WTC11 (cell line): ENCODE measurements at regions of chr2 and their contacts with region 1.

Region 1: GRCh38 chr2:233251306-233252116 is at the start of gene ATG16L1:
- DNase-seq: peak; percentile 94
- ATAC-seq: peak; percentile 98
- H3K4me3 Mint-ChIP-seq: peak within 1 kb of the TSS; percentile 95
- H3K27ac Mint-ChIP-seq: peak within 1 kb of the TSS; percentile 86
- H3K4me1 Mint-ChIP-seq: peaks cover 8% of the 10 kb centered on the region
- H3K27me3 Mint-ChIP-seq: peaks cover 2% of the 10 kb centered on the region; the same call in 1 of the 2 replicates
- CTCF ChIP-seq: peak; percentile 65
- total RNA-seq, gene ATG16L1: 31.8 to 36.4 TPM (median 32.5 TPM) in 3 replicates

Region 2: GRCh38 chr2:232979871-232980461 is 271.5 kb before region 1 on chr2:
- CTCF ChIA-PET with region 1: interaction called, 11 read pairs
- POLR2A ChIA-PET with region 1: no interaction called
- DNase-seq: no peak
- ATAC-seq: no peak
- H3K4me3 Mint-ChIP-seq: no peak overlapping the region
- H3K27ac Mint-ChIP-seq: peak overlapping the region; percentile 82
- H3K4me1 Mint-ChIP-seq: peaks cover 30% of the 10 kb centered on the region
- H3K27me3 Mint-ChIP-seq: no peaks in the 10 kb centered on the region
- CTCF ChIP-seq: no peak

Region 3: DNA sequence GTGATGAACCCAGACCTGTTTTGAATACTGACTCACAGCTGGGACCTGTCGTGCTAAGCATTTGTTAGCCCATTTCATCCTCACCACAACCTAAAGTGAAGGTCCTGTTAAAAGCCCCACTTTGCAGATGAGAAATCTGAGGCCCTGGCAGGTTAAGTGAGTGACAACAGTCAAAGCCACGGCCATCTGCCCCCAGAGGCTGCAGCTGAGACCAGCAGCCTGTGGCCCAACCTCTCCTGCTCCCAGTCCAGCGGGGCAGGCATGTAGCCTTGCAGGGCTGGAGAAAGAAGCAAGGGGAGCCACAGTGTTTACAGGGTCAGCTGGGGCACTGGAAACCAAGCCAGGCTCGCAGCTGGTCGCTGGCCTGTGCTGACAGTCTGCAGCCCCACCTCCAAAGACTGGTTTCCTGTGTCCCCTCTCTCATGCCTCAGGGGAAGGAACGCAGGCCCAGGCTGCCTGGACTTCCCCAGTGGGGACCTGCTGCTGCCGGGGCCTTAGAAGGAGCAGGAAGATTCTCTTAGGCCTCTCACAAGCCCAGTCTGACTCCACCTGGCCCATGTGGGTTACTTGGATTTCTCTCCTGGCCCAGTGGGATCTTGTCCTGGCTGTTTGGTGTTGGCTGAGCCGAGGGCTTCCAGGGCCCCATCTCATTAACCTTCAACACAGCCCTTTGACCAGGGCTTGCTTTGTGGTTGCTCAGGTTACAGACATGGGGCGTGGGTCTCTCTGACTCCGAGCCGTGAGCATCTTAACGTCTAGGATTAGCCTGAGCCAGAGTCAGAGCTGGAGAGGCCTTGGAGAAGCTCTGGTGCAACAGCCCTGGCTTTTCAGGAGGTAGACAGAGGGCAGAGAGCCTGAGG is 189.7 kb before region 1 on chr2:
- CTCF ChIA-PET with region 1: interaction called, 13 read pairs
- POLR2A ChIA-PET with region 1: no interaction called
- DNase-seq: no peak
- ATAC-seq: peak; percentile 40
- H3K4me3 Mint-ChIP-seq: no peak overlapping the region
- H3K27ac Mint-ChIP-seq: no peak overlapping the region
- H3K4me1 Mint-ChIP-seq: peaks cover 16% of the 10 kb centered on the region
- H3K27me3 Mint-ChIP-seq: no peaks in the 10 kb centered on the region
- CTCF ChIP-seq: no peak

Region 4: GRCh38 chr2:233100192-233100998 is 151.1 kb before region 1 on chr2:
- CTCF ChIA-PET with region 1: interaction called, 22 read pairs
- POLR2A ChIA-PET with region 1: no interaction called
- DNase-seq: no peak
- ATAC-seq: no peak
- H3K4me3 Mint-ChIP-seq: no peak overlapping the region
- H3K27ac Mint-ChIP-seq: no peak overlapping the region
- H3K4me1 Mint-ChIP-seq: peaks cover 3% of the 10 kb centered on the region
- H3K27me3 Mint-ChIP-seq: no peaks in the 10 kb centered on the region
- CTCF ChIP-seq: no peak

Region 5: DNA sequence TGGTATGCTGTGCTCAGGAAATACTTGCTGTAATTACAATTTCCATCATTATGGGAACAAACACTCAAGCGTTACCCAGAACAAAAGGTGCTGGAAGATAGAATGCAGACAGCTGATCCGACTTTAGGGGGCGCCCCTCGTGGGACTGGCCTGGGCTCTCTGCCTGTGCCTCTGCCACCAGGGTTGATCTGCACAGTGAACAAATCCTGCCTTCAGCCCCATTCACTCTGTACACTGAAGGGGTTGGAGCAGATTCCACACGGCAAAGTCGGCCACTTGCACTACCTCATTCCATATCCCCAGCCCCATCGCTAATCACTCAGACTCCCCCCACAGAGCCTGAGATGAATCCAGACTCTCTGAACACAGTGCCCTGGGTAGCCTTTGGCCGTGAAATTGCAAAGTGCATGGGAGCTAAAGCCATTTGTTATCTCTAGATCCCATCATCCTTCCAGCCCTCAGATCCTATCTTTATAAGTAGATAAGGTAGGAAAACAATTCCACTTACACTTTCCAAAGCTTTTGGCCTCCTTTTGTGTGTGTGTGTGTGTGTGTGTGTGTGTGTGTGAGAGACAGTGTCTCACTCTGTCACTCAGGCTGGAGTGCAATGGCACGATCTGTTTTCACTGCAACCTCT is 122.0 kb before region 1 on chr2:
- CTCF ChIA-PET with region 1: interaction called, 10 read pairs
- POLR2A ChIA-PET with region 1: no interaction called
- DNase-seq: peak; percentile 78
- ATAC-seq: peak; percentile 92
- H3K4me3 Mint-ChIP-seq: no peak overlapping the region
- H3K27ac Mint-ChIP-seq: no peak overlapping the region; the same call in 1 of the 2 replicates
- H3K4me1 Mint-ChIP-seq: peaks cover 24% of the 10 kb centered on the region
- H3K27me3 Mint-ChIP-seq: no peaks in the 10 kb centered on the region
- CTCF ChIP-seq: peak; percentile 38; the same call in 1 of the 2 replicates

Region 6: DNA sequence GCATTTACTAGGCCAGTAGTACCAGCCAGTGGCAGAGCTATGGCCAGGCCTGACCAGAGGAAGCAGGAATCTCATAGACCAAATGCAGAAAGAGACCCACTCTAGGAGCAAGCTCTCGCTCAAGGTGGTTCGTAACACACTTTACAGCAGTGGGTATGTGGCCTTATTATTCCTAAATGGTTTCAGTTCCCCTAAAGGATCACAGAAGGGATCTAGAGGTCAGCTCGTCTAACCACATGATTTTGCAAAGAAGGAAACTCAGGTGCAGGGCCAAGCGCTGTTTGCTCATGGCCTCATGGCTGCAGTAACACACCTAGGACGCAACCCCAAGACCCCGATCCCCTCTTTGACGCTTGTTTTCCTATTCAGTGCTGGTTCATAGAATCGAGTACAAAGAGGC is 65.5 kb before region 1 on chr2:
- CTCF ChIA-PET with region 1: no interaction called
- POLR2A ChIA-PET with region 1: no interaction called
- DNase-seq: no peak
- ATAC-seq: no peak
- H3K4me3 Mint-ChIP-seq: no peak overlapping the region
- H3K27ac Mint-ChIP-seq: peak overlapping the region; percentile 62; the same call in 1 of the 2 replicates
- H3K4me1 Mint-ChIP-seq: peaks cover 4% of the 10 kb centered on the region; the same call in 1 of the 2 replicates
- H3K27me3 Mint-ChIP-seq: no peaks in the 10 kb centered on the region
- CTCF ChIP-seq: no peak

Region 7: GRCh38 chr2:233234264-233234663 is 17.2 kb before region 1 on chr2:
- CTCF ChIA-PET with region 1: interaction called, 13 read pairs
- POLR2A ChIA-PET with region 1: no interaction called
- DNase-seq: no peak
- ATAC-seq: no peak
- H3K4me3 Mint-ChIP-seq: no peak overlapping the region
- H3K27ac Mint-ChIP-seq: no peak overlapping the region
- H3K4me1 Mint-ChIP-seq: no peaks in the 10 kb centered on the region
- H3K27me3 Mint-ChIP-seq: no peaks in the 10 kb centered on the region
- CTCF ChIP-seq: no peak